ENCODE measurements at regions of chr12 and their contacts with region 1.

Region 1: DNA sequence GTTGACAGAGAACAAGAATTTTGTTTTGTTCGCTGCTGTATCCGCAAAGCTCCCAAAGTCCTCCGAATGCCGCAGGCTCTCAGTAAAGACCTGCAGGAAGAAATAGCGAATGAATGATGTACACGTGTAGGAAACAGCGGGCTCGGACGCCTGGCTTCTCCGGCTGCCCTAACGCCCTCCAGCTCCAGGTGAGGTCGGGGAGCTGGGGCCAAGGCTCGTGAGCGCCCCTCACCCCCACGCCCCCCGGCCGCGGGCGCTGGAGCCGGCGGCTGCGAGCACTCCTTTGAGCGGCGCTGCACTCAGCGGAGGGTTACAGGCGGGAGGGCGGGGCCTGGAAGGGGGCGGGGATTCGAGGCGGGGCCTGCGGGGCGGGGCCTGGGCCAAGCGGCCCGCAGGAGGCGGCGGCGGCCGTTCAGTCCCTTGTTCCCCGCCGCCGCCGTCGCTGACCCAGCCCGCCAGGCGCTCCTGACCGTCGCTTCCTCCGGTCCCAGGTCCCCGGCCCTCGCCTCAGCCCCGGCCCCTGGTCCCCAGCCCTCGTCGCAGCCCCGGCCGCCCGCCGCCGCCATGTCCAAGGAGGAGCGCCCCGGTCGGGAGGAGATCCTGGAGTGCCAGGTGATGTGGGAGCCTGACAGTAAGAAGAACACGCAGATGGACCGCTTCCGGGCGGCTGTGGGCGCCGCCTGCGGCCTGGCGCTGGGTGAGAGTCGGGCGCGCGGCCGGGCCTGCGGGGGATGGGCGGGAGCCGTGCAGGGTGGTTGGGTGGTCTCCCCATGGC is at the start of gene AACS:
- DNase-seq: peak; percentile 82
- H3K4me3 ChIP-seq: peak within 1 kb of the TSS; percentile 66 to 97 (median 78)
- H3K27ac ChIP-seq: peak within 1 kb of the TSS; percentile 75 to 84 (median 78)
- H3K4me1 ChIP-seq: peaks cover 0 to 19% (median 15%) of the 10 kb centered on the region in 4 donors
- H3K27me3 ChIP-seq: no peaks in the 10 kb centered on the region
- CTCF ChIP-seq: no peak
- EP300 ChIP-seq: no peak
- POLR2A ChIP-seq: no peak
- total RNA-seq, gene AACS: 8.1 to 12.7 (median 10.1) TPM

Region 2: DNA sequence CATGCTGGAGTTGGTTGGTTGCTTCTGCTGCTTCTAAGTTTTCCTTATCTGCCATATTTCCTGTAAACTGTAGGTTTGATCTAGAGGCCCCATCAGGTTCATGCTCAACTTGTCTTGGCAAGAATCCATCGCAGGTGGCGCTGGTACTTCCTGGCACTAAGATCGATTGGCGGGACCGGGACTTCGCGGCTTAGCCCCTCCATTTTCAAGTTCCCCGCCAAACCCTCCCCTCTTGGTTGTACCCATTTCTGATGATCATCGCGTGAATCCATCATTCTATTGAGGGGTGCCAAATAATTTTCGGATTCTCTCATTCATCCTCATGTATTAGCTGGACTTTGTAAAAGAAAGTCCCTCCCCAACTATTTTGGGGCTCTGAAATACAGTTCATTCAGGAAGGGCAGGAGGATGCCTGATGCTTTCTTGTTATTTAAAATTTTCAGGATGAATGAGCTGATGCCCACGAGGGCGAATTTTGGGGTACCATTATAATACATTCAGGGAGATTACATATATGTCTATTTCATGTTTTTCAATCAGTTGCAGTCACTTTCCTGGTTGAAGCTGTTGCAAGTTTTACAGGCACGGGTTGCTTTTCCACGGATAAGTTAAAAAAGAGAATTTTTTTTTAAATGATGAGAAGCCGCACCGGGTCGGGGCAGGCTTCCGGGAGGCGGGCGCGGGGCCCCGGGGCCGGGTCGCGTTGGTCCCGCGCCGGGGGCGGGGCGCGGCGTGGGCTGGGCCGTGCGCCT is 72.2 kb before region 1 on chr12:
- intact Hi-C with region 1: loop called (anchors 2 kb)
- DNase-seq: no peak
- H3K4me3 ChIP-seq: peak overlapping the region; percentile 25 to 67 (median 62)
- H3K27ac ChIP-seq: peak overlapping the region in 1 of 4 donors; percentile 17
- H3K4me1 ChIP-seq: peaks cover 0 to 33% (median 22%) of the 10 kb centered on the region in 4 donors
- H3K27me3 ChIP-seq: no peaks in the 10 kb centered on the region
- CTCF ChIP-seq: no peak
- EP300 ChIP-seq: no peak
- POLR2A ChIP-seq: no peak

Region 3: GRCh38 chr12:125006206-125006764 is 58.9 kb before region 1 on chr12:
- intact Hi-C with region 1: no loop called
- DNase-seq: no peak
- H3K4me3 ChIP-seq: no peak overlapping the region
- H3K27ac ChIP-seq: no peak overlapping the region
- H3K4me1 ChIP-seq: no peaks in the 10 kb centered on the region
- H3K27me3 ChIP-seq: no peaks in the 10 kb centered on the region
- CTCF ChIP-seq: no peak
- EP300 ChIP-seq: no peak
- POLR2A ChIP-seq: no peak

Region 4: DNA sequence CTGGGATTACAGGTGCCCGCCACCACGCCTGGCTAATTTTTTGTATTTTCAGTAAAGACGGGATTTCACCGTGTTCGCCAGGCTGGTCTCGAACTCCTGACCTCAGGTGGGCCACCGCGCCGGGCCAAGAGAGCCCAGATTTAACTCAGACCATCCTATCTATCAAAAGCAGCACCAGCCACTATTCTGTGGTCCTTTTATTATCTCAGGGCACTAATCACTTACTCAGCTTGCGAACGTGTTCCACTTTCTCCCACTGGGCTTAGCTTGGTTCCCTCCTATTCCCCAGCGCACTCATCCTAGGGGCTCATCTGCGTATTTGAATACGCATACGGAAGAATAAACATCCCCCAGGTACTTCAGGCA is 16.1 kb before region 1 on chr12:
- intact Hi-C with region 1: loop called (anchors 1 kb)
- DNase-seq: peak; percentile 51
- H3K4me3 ChIP-seq: peak overlapping the region; percentile 31 to 56 (median 53)
- H3K27ac ChIP-seq: peak overlapping the region in 3 of 4 donors; percentile 24 to 47 (median 38)
- H3K4me1 ChIP-seq: peaks cover 0 to 10% (median 5%) of the 10 kb centered on the region in 4 donors
- H3K27me3 ChIP-seq: no peaks in the 10 kb centered on the region
- CTCF ChIP-seq: no peak
- EP300 ChIP-seq: no peak
- POLR2A ChIP-seq: no peak